CD8-positive, alpha-beta memory T cell (primary cell): ENCODE measurements at regions of chr20 and their contacts with region 1.

Region 1: GRCh38 chr20:63980806-63981728 is at the start of gene PRPF6:
- DNase-seq: peak; percentile 92 to 96 (median 93)
- H3K4me3 ChIP-seq: peak within 1 kb of the TSS; percentile 93
- H3K4me3 Mint-ChIP-seq: peak within 1 kb of the TSS; percentile 89 to 95 (median 92)
- H3K27ac ChIP-seq: peak within 1 kb of the TSS; percentile 90
- H3K27ac Mint-ChIP-seq: peak within 1 kb of the TSS; percentile 93 to 99 (median 96)
- H3K4me1 ChIP-seq: peaks cover 54% of the 10 kb centered on the region
- H3K4me1 Mint-ChIP-seq: peaks cover 58 to 71% (median 68%) of the 10 kb centered on the region in 3 donors
- H3K27me3 ChIP-seq: no peaks in the 10 kb centered on the region
- H3K27me3 Mint-ChIP-seq: no peaks in the 10 kb centered on the region
- total RNA-seq, gene PRPF6: 76.2 to 78.3 TPM

Region 2: GRCh38 chr20:63791497-63792156 is 189.4 kb before region 1 on chr20:
- CTCF ChIA-PET with region 1: no interaction called
- POLR2A ChIA-PET with region 1: interaction called, 13 read pairs
- DNase-seq: no peak
- H3K4me3 ChIP-seq: no peak overlapping the region
- H3K4me3 Mint-ChIP-seq: no peak overlapping the region
- H3K27ac ChIP-seq: no peak overlapping the region
- H3K27ac Mint-ChIP-seq: peak overlapping the region in 1 of 8 donors; percentile 33
- H3K4me1 ChIP-seq: peaks cover 3% of the 10 kb centered on the region
- H3K4me1 Mint-ChIP-seq: peaks cover 0 to 6% (median 0%) of the 10 kb centered on the region in 3 donors
- H3K27me3 ChIP-seq: no peaks in the 10 kb centered on the region
- H3K27me3 Mint-ChIP-seq: peaks cover 9 to 15% of the 10 kb centered on the region in 2 donors

Region 3: DNA sequence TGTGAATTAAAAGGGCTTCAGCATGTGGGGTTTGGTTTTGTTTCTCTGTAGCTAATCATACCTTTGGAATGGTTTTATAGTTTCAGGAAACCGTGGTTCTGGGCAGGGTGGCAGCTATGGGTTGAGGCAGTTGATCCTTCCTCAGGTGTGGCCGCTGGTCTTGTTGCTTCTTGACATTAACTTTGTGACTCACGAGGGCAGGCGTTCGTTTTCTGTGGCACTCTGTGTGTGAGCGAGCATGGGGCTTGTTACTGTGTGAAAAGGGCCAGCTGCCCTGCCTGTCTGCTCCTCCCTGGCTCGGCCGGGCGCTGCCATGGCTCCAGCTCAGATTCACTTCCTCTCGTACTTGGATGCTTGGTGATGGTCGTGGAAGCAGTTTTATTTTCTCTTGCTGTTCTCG is 69.9 kb before region 1 on chr20:
- CTCF ChIA-PET with region 1: no interaction called
- POLR2A ChIA-PET with region 1: no interaction called
- DNase-seq: no peak
- H3K4me3 ChIP-seq: no peak overlapping the region
- H3K4me3 Mint-ChIP-seq: peak overlapping the region in 4 of 7 donors; percentile 29 to 40 (median 33)
- H3K27ac ChIP-seq: no peak overlapping the region
- H3K27ac Mint-ChIP-seq: peak overlapping the region in 5 of 8 donors; percentile 10 to 66 (median 63)
- H3K4me1 ChIP-seq: peaks cover 16% of the 10 kb centered on the region
- H3K4me1 Mint-ChIP-seq: peaks cover 34 to 53% (median 46%) of the 10 kb centered on the region in 3 donors
- H3K27me3 ChIP-seq: no peaks in the 10 kb centered on the region
- H3K27me3 Mint-ChIP-seq: no peaks in the 10 kb centered on the region

Region 4: DNA sequence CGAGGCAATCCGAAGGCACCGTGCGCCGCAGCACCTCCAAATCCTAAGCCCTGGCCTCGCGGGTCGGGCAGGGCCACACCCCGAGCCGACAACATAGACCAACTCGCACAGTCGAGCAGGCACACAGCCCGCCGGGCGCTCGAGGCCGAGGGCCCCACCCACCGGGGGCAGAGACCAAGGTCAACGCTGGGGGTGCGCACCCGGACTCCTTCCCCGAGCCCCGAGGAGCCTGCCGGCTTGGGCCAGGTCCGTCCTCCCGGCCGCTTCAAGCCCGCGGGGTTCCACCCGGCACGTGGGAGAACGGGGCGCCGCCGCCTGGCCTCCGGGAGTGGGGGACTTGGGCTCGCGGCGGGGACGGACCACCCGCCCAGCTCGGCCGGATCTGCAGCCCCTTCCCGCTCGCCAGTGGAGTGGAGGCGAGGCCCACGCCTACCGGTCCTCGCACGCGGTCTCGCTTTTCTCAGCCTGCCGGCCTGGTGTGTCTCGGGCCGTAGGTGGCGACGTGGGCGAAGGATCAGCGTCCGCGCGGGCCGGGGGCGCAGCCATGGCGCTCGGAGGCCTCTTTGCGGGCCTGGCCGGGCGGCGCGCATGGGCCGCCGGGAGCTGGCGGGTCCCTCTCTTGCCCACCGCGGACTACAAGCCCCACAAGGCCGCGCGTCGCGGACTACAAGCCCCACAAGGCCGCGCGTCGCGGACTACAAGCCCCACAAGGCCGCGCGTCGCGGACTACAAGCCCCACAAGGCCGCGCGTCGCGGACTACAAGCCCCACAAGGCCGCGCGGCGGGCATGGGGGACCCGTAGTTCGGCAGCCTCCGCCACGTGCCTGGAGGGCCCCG is 25.0 kb before region 1 on chr20 and contains the start of gene UCKL1:
- CTCF ChIA-PET with region 1: interaction called, 14 read pairs
- POLR2A ChIA-PET with region 1: interaction called, 18 read pairs
- DNase-seq: peak; percentile 84 to 94 (median 91)
- H3K4me3 ChIP-seq: peak within 1 kb of the TSS; percentile 74
- H3K4me3 Mint-ChIP-seq: peak within 1 kb of the TSS; percentile 77 to 92 (median 86)
- H3K27ac ChIP-seq: peak within 1 kb of the TSS; percentile 79
- H3K27ac Mint-ChIP-seq: peak within 1 kb of the TSS; percentile 66 to 88 (median 82)
- H3K4me1 ChIP-seq: peaks cover 26% of the 10 kb centered on the region
- H3K4me1 Mint-ChIP-seq: peaks cover 22 to 45% (median 22%) of the 10 kb centered on the region in 3 donors
- H3K27me3 ChIP-seq: no peaks in the 10 kb centered on the region
- H3K27me3 Mint-ChIP-seq: no peaks in the 10 kb centered on the region
- total RNA-seq, gene UCKL1: 35.7 to 36.2 TPM

Region 5: GRCh38 chr20:64062596-64063388 is 81.7 kb after region 1 on chr20 and contains the start of gene TCEA2:
- CTCF ChIA-PET with region 1: interaction called, 13 read pairs
- POLR2A ChIA-PET with region 1: interaction called, 5 read pairs
- DNase-seq: peak; percentile 85 to 94 (median 87)
- H3K4me3 ChIP-seq: peak within 1 kb of the TSS; percentile 50
- H3K4me3 Mint-ChIP-seq: peak within 1 kb of the TSS; percentile 82 to 89 (median 86)
- H3K27ac ChIP-seq: peak within 1 kb of the TSS; percentile 51
- H3K27ac Mint-ChIP-seq: peak within 1 kb of the TSS in 7 of 8 donors; percentile 49 to 92 (median 68)
- H3K4me1 ChIP-seq: peaks cover 45% of the 10 kb centered on the region
- H3K4me1 Mint-ChIP-seq: peaks cover 24 to 53% (median 28%) of the 10 kb centered on the region in 3 donors
- H3K27me3 ChIP-seq: no peaks in the 10 kb centered on the region
- H3K27me3 Mint-ChIP-seq: no peaks in the 10 kb centered on the region
- total RNA-seq, gene TCEA2: 24.2 to 24.5 TPM

Region 6: GRCh38 chr20:64119681-64120341 is 138.7 kb after region 1 on chr20:
- CTCF ChIA-PET with region 1: interaction called, 12 read pairs
- POLR2A ChIA-PET with region 1: no interaction called
- DNase-seq: no peak
- H3K4me3 ChIP-seq: peak overlapping the region; percentile 43
- H3K4me3 Mint-ChIP-seq: peak overlapping the region; percentile 47 to 74 (median 70)
- H3K27ac ChIP-seq: no peak overlapping the region
- H3K27ac Mint-ChIP-seq: peak overlapping the region in 5 of 8 donors; percentile 9 to 78 (median 44)
- H3K4me1 ChIP-seq: peaks cover 11% of the 10 kb centered on the region
- H3K4me1 Mint-ChIP-seq: peaks cover 6 to 10% (median 7%) of the 10 kb centered on the region in 3 donors
- H3K27me3 ChIP-seq: no peaks in the 10 kb centered on the region
- H3K27me3 Mint-ChIP-seq: peaks cover 8 to 23% of the 10 kb centered on the region in 2 donors